A549 (cell line): ENCODE measurements at regions of chr14 and their contacts with region 1.

Region 1: GRCh38 chr14:76784266-76785264 is 23.3 kb downstream of the VASH1 start:
- DNase-seq: peak; percentile 78 to 97
- ATAC-seq: peak; percentile 93 to 99
- H3K4me3 ChIP-seq: no peak overlapping the region
- H3K27ac ChIP-seq: no peak overlapping the region
- H3K4me1 ChIP-seq: no peaks in the 10 kb centered on the region
- CTCF ChIP-seq: peak; percentile 67
- EP300 ChIP-seq: no peak
- POLR2A ChIP-seq: no peak
- RAD21 ChIP-seq: peak; percentile 56 to 69

Region 2: GRCh38 chr14:76755610-76756370 is 28.8 kb before region 1 on chr14:
- CTCF ChIA-PET with region 1: interaction called, 13 read pairs
- POLR2A ChIA-PET with region 1: no interaction called
- DNase-seq: no peak
- ATAC-seq: no peak
- H3K4me3 ChIP-seq: no peak overlapping the region
- H3K27ac ChIP-seq: no peak overlapping the region
- H3K4me1 ChIP-seq: no peaks in the 10 kb centered on the region
- CTCF ChIP-seq: no peak
- EP300 ChIP-seq: no peak
- POLR2A ChIP-seq: no peak
- RAD21 ChIP-seq: no peak

Region 3: GRCh38 chr14:76773188-76773885 is 11.2 kb before region 1 on chr14:
- CTCF ChIA-PET with region 1: interaction called, 20 read pairs
- POLR2A ChIA-PET with region 1: no interaction called
- DNase-seq: peak; percentile 53 to 54
- ATAC-seq: peak; percentile 59 to 70; a peak in 4 of 6 replicates
- H3K4me3 ChIP-seq: no peak overlapping the region
- H3K27ac ChIP-seq: peak overlapping the region; percentile 20 to 65; a peak in 4 of 6 replicates
- H3K4me1 ChIP-seq: peaks cover 15% of the 10 kb centered on the region
- CTCF ChIP-seq: no peak
- EP300 ChIP-seq: no peak
- POLR2A ChIP-seq: no peak
- RAD21 ChIP-seq: no peak

Region 4: GRCh38 chr14:76806446-76806845 is 21.9 kb after region 1 on chr14:
- CTCF ChIA-PET with region 1: interaction called, 25 read pairs
- POLR2A ChIA-PET with region 1: no interaction called
- DNase-seq: no peak
- ATAC-seq: no peak
- H3K4me3 ChIP-seq: no peak overlapping the region
- H3K27ac ChIP-seq: no peak overlapping the region
- H3K4me1 ChIP-seq: peaks cover 4% of the 10 kb centered on the region; the same call in 2 of the 3 replicates
- CTCF ChIP-seq: no peak
- EP300 ChIP-seq: no peak
- POLR2A ChIP-seq: no peak
- RAD21 ChIP-seq: no peak

Region 5: DNA sequence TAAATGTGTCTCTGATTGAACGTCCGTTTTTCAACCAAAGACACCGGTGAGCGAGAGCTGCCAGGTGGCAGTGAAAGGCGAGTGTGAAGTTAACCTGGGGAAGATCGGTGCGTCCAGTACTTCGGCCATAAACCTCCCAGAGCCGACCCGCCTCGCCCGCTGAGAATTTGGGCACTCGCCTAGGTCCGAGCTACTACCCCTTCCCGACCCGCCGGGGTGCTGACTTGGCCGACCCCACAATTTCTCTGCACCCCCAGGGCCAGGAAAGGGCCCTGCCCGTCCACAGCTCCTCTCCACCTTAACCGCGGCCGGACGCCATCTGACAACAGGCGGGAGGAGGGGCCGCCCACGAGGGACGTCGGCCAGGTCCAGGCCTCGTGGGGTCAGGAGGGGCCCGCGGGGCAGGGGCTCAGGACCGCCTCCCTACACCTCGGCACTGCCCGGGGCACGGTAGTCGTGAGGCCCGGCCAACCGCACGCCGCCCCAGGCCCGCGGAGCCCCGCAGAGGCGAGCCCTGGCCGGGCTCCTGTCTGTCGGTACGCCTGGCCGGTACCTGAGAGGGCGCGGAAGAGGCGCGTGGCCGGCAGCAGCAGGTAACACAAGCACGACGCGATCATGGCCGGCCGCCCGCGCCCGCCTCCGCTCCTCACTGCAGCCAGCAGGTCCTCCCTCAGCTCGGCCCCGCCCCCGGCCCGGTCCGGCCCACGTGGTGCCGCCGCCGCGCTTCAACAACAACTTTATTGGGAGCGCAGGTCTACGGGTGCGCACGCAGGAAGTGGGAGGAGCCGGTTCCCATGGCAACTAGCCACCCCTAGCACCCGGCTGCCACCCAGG is 27.9 kb after region 1 on chr14 and contains the start of gene ANGEL1:
- CTCF ChIA-PET with region 1: interaction called, 25 read pairs
- POLR2A ChIA-PET with region 1: interaction called, 5 read pairs
- DNase-seq: peak; percentile 79 to 96
- ATAC-seq: peak; percentile 87 to 96
- H3K4me3 ChIP-seq: peak within 1 kb of the TSS; percentile 70
- H3K27ac ChIP-seq: peak within 1 kb of the TSS; percentile 82 to 96
- H3K4me1 ChIP-seq: peaks cover 11% of the 10 kb centered on the region; the same call in 2 of the 3 replicates
- CTCF ChIP-seq: no peak
- EP300 ChIP-seq: no peak
- POLR2A ChIP-seq: peak; percentile 89
- RAD21 ChIP-seq: no peak
- polyA plus RNA-seq, gene ANGEL1: 17.6 and 22.2 TPM in 2 replicates